ENCODE measurements at regions of chr11 and their contacts with region 1.

Region 1: DNA sequence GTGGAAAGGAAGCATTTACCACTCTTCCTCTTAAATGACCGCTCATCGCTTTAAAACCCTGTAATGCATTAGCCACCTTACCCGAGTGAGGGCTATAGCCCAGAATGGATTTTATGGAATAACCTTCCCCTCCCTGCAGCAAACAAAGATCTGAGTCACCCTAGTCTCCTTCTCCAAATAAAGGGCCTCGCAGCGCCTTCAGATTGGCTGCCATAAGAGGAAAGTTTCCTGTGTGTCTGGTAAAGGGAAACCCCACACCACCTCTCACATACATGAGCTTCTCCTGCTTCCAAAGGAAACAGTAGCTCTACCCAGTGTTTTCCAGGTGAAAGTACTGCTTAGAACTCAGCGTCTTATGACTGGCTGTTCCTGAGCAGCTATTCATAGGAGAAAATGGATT is 47.8 kb downstream of the PPP2R1B start:
- DNase-seq: no peak
- ATAC-seq: peak in 3 of 4 donors; percentile 46 to 61 (median 54)
- H3K4me3 ChIP-seq: no peak overlapping the region
- H3K27ac ChIP-seq: peak overlapping the region in 2 of 12 donors; percentile 32 to 55
- H3K4me1 ChIP-seq: peaks cover 0 to 31% (median 4%) of the 10 kb centered on the region in 12 donors
- H3K27me3 ChIP-seq: no peaks in the 10 kb centered on the region
- CTCF ChIP-seq: no peak
- POLR2A ChIP-seq: no peak

Region 2: GRCh38 chr11:111422494-111423249 is 295.8 kb before region 1 on chr11:
- intact Hi-C with region 1: no loop called
- DNase-seq: peak in 2 of 5 donors; percentile 32 to 47
- ATAC-seq: peak in 3 of 4 donors; percentile 68 to 78 (median 78)
- H3K4me3 ChIP-seq: no peak overlapping the region
- H3K27ac ChIP-seq: no peak overlapping the region
- H3K4me1 ChIP-seq: peaks cover 0 to 20% (median 5%) of the 10 kb centered on the region in 12 donors
- H3K27me3 ChIP-seq: peaks cover 0 to 6% (median 0%) of the 10 kb centered on the region in 9 donors
- CTCF ChIP-seq: peak; percentile 44 to 73 (median 66)
- POLR2A ChIP-seq: no peak

Region 3: GRCh38 chr11:111623527-111624030 is 94.9 kb before region 1 on chr11:
- intact Hi-C with region 1: no loop called
- DNase-seq: no peak
- ATAC-seq: peak in 2 of 4 donors; percentile 52
- H3K4me3 ChIP-seq: no peak overlapping the region
- H3K27ac ChIP-seq: no peak overlapping the region
- H3K4me1 ChIP-seq: peaks cover 0 to 9% (median 0%) of the 10 kb centered on the region in 12 donors
- H3K27me3 ChIP-seq: no peaks in the 10 kb centered on the region
- CTCF ChIP-seq: no peak
- POLR2A ChIP-seq: no peak

Region 4: GRCh38 chr11:111652184-111652583 is 66.3 kb before region 1 on chr11:
- intact Hi-C with region 1: no loop called
- DNase-seq: no peak
- ATAC-seq: no peak
- H3K4me3 ChIP-seq: no peak overlapping the region
- H3K27ac ChIP-seq: no peak overlapping the region
- H3K4me1 ChIP-seq: peaks cover 0 to 6% (median 0%) of the 10 kb centered on the region in 12 donors
- H3K27me3 ChIP-seq: no peaks in the 10 kb centered on the region
- CTCF ChIP-seq: no peak
- POLR2A ChIP-seq: no peak

Region 5: DNA sequence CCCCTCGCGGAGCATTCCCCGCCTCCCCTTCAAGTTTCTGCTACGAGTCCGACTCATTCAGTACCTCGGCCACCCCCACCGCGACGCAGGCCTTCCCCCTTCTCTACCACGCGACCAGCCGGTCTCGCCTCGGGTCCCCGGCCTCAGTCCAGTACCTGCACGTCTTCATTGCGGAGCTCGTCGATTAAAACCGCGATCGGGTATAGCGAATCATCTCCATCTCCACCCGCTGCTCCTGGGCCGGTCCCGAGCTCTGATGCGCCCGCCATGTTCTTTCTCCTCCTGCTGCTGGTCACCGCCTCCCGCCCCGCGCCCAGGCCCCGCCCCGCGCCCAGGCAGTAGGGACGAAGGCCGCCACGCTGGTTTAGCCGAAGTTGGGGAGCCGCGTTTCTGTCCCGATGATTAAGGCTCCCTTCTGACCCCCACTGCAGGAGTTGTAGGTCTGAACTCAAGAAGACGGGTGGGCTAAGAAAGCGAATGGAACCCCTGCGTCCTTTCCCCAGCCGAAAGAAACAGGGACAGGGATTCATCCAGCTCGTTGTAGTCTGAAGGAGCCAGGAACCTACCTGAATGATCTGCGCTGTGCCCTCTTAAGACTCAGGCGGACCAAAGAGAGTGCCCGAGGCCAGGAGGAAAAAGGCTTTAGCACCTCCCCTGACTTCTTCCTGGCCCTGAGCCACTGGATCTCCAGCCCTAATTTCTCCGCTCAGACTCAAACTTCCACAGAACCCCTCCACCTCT is 47.8 kb after region 1 on chr11 and contains the start of gene PPP2R1B:
- intact Hi-C with region 1: loop called in 2 of 10 experiments (anchors 10 kb)
- DNase-seq: peak; percentile 74 to 88 (median 81)
- ATAC-seq: peak; percentile 92 to 99 (median 98)
- H3K4me3 ChIP-seq: peak within 1 kb of the TSS; percentile 66 to 99 (median 90)
- H3K27ac ChIP-seq: peak within 1 kb of the TSS; percentile 66 to 91 (median 84)
- H3K4me1 ChIP-seq: peaks cover 0 to 51% (median 17%) of the 10 kb centered on the region in 12 donors
- H3K27me3 ChIP-seq: no peaks in the 10 kb centered on the region
- CTCF ChIP-seq: no peak
- POLR2A ChIP-seq: peak in 1 of 2 donors; percentile 36
- total RNA-seq, gene PPP2R1B: 6.8 to 99.9 (median 11.8) TPM